Esophagus muscularis mucosa (tissue), 4 donors: ENCODE measurements at regions of chr1 and their contacts with region 1.

Region 1: GRCh38 chr1:119888476-119888875 is 7.8 kb downstream of the ADAM30 start:
- DNase-seq: no peak
- H3K4me3 ChIP-seq: no peak overlapping the region
- H3K27ac ChIP-seq: no peak overlapping the region
- H3K4me1 ChIP-seq: peaks cover 0 to 6% (median 0%) of the 10 kb centered on the region in 4 donors
- H3K27me3 ChIP-seq: no peaks in the 10 kb centered on the region
- CTCF ChIP-seq: no peak
- EP300 ChIP-seq: no peak
- POLR2A ChIP-seq: no peak

Region 2: DNA sequence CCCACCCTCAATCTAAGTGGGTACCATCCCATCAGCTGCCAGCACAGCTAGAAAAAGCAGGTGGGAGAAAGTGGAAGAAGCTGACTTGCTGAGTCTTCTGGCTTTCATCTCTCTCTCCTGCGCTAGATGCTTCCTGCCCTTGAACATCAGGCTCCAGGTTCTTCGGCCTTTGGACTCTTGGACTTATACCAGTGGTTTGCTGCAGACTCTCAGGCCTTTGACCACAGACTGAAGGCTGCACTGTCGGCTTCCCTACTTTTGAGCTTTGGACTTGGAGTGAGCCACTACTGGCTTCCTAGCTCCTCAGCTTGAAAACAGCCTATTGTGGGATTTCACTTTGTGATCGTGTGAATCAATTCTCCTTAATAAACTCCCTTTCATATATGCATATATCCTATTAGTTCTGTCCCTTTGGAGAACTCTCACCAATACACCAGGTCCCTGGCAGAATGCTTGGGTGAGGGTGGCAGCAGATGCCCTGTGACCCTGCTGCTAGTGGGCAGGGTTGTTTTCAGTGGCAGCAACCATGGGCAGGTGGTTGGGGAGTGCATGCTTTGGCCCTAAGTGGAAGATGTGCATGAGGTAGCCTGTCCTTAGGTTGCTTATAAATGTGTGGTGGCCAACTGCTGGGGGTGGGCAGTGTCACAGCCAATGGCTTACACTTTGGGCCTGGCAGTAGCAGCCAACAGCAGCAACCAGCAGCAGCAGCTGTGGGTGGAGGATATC is 18.6 kb after region 1 on chr1:
- intact Hi-C with region 1: loop called (anchors 2 kb)
- DNase-seq: peak; percentile 68
- H3K4me3 ChIP-seq: no peak overlapping the region
- H3K27ac ChIP-seq: no peak overlapping the region
- H3K4me1 ChIP-seq: peaks cover 0 to 6% (median 4%) of the 10 kb centered on the region in 4 donors
- H3K27me3 ChIP-seq: no peaks in the 10 kb centered on the region
- CTCF ChIP-seq: no peak
- EP300 ChIP-seq: no peak
- POLR2A ChIP-seq: no peak

Region 3: DNA sequence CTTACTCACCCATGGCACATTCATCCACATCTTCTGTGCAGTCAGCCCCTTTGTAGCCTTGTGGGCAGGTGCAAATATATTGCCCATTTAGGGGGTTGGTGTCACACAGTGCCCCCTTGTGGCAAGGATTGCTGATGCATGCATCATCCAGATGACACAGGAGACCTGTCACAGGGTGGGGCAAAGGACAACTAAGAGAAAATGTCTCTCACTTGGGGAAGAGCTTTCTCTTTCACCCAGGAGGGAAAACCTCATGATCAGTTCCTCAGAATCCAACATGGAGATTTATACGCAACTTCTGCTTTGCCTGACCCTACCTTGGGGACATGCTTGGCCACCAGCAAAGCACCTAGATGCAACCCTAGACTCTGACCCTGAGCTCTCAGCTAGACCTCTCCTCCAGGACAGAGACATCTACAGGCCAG is 79.6 kb after region 1 on chr1:
- intact Hi-C with region 1: no loop called
- DNase-seq: no peak
- H3K4me3 ChIP-seq: no peak overlapping the region
- H3K27ac ChIP-seq: no peak overlapping the region
- H3K4me1 ChIP-seq: peaks cover 22 to 38% (median 25%) of the 10 kb centered on the region in 4 donors
- H3K27me3 ChIP-seq: no peaks in the 10 kb centered on the region
- CTCF ChIP-seq: peak; percentile 58 to 77 (median 58)
- EP300 ChIP-seq: no peak
- POLR2A ChIP-seq: no peak